ENCODE measurements at regions of chr4 and their contacts with region 1.

Region 1: DNA sequence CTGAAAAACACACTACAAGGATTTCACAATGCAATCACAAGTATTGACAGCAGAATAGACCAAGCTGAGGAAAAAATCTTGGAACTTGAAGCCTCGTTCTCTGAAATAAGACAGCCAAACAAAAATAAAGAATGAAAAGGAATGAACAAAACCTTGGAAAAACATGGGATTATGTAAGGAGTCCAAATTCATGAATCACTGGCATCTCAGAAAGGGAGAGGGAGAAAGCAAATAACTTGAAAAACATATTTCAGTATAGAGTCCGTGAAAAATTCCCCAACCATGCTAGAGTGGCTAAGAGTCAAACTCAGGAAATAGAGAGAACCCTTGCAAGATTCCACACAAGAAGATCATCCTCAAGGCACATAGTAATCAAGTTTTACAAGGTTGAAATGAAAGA is 178.5 kb upstream of the CTSO start:
- DNase-seq: no peak
- H3K4me3 ChIP-seq: no peak overlapping the region
- H3K27ac ChIP-seq: no peak overlapping the region
- H3K4me1 ChIP-seq: no peaks in the 10 kb centered on the region
- H3K27me3 ChIP-seq: no peaks in the 10 kb centered on the region
- CTCF ChIP-seq: no peak
- EP300 ChIP-seq: no peak
- POLR2A ChIP-seq: no peak
- RAD21 ChIP-seq: no peak

Region 2: DNA sequence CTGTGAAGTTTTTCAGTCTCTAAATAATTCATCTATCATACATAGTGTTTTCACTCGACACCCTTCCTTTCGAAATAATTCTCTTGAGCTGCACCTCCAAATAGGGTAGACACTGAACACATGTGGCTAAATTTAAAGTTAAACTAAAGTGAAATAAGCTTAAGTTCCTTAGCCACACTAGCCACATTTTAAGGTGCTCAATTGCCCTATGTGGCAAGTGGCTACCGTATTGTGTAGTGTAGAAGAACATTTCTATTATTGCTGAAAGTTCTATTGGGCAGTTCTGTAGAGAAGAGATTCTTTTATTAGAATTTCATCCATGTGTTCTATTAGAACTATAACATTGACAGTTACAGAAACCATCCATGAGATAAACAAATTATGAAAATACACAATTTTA is 71.5 kb before region 1 on chr4:
- CTCF ChIA-PET with region 1: no interaction called
- POLR2A ChIA-PET with region 1: no interaction called
- DNase-seq: no peak
- H3K4me3 ChIP-seq: no peak overlapping the region
- H3K27ac ChIP-seq: no peak overlapping the region
- H3K4me1 ChIP-seq: no peaks in the 10 kb centered on the region
- H3K27me3 ChIP-seq: no peaks in the 10 kb centered on the region
- CTCF ChIP-seq: no peak
- EP300 ChIP-seq: no peak
- POLR2A ChIP-seq: no peak
- RAD21 ChIP-seq: no peak

Region 3: DNA sequence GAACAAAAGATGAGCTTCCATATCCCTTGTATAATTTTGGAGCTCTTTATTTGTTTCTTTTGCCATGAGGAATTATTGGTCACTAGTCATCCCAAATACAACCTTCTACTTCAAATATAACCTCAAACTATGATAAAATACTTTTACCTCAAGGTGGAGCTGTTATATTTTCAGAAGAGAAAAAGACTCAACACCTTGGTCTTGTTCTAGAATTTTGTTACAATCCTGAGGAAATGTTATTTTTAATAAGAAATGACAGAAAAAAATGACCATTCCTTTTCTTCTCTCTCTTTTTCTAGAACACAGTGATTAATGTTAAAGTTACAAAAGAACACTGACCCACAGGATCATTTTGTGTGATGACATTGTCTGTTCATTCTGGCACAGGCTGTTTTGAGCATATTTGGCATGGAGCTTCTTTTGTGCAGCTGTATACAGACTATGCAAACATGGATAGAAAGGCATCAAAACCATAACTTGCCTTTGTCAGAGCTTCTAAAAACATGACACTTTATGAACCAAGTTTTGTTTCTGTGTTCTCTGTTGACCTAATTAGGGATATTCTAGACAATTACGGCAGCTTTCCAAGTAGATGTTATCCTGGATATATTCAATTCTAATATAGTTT is 18.9 kb before region 1 on chr4:
- CTCF ChIA-PET with region 1: interaction called, 10 read pairs
- POLR2A ChIA-PET with region 1: no interaction called
- DNase-seq: no peak
- H3K4me3 ChIP-seq: no peak overlapping the region
- H3K27ac ChIP-seq: no peak overlapping the region
- H3K4me1 ChIP-seq: peaks cover 2 to 18% (median 10%) of the 10 kb centered on the region in 4 experiments; a peak in 6 of 7 replicates
- H3K27me3 ChIP-seq: no peaks in the 10 kb centered on the region
- CTCF ChIP-seq: no peak; a peak in 1 of 4 replicates
- EP300 ChIP-seq: no peak
- POLR2A ChIP-seq: no peak
- RAD21 ChIP-seq: no peak; a peak in 1 of 4 replicates

Region 4: GRCh38 chr4:156144961-156145360 is 12.8 kb after region 1 on chr4:
- CTCF ChIA-PET with region 1: no interaction called
- POLR2A ChIA-PET with region 1: no interaction called
- DNase-seq: no peak
- H3K4me3 ChIP-seq: no peak overlapping the region
- H3K27ac ChIP-seq: no peak overlapping the region
- H3K4me1 ChIP-seq: no peaks in the 10 kb centered on the region
- H3K27me3 ChIP-seq: no peaks in the 10 kb centered on the region
- CTCF ChIP-seq: no peak
- EP300 ChIP-seq: no peak
- POLR2A ChIP-seq: no peak
- RAD21 ChIP-seq: no peak